Prostate gland (tissue), 2 donors: ENCODE measurements at regions of chr6 and their contacts with region 1.

Region 1: GRCh38 chr6:129251669-129252376 is 368.9 kb downstream of the LAMA2 start:
- DNase-seq: peak; percentile 57
- H3K4me3 ChIP-seq: no peak overlapping the region
- H3K27ac ChIP-seq: no peak overlapping the region
- H3K4me1 ChIP-seq: no peaks in the 10 kb centered on the region
- H3K27me3 ChIP-seq: no peaks in the 10 kb centered on the region
- CTCF ChIP-seq: peak; percentile 48 to 78 (median 68)
- POLR2A ChIP-seq: no peak

Region 2: GRCh38 chr6:128725271-128726233 is 526.3 kb before region 1 on chr6:
- intact Hi-C with region 1: loop called (anchors 5 kb)
- DNase-seq: no peak
- H3K4me3 ChIP-seq: no peak overlapping the region
- H3K27ac ChIP-seq: no peak overlapping the region
- H3K4me1 ChIP-seq: no peaks in the 10 kb centered on the region
- H3K27me3 ChIP-seq: no peaks in the 10 kb centered on the region
- CTCF ChIP-seq: peak in 3 of 4 experiments; percentile 41 to 52 (median 48)
- POLR2A ChIP-seq: no peak

Region 3: GRCh38 chr6:128807577-128807976 is 444.2 kb before region 1 on chr6:
- intact Hi-C with region 1: loop called (anchors 5 kb)
- DNase-seq: no peak
- H3K4me3 ChIP-seq: no peak overlapping the region
- H3K27ac ChIP-seq: no peak overlapping the region
- H3K4me1 ChIP-seq: no peaks in the 10 kb centered on the region
- H3K27me3 ChIP-seq: no peaks in the 10 kb centered on the region
- CTCF ChIP-seq: peak; percentile 17 to 35 (median 26)
- POLR2A ChIP-seq: no peak

Region 4: DNA sequence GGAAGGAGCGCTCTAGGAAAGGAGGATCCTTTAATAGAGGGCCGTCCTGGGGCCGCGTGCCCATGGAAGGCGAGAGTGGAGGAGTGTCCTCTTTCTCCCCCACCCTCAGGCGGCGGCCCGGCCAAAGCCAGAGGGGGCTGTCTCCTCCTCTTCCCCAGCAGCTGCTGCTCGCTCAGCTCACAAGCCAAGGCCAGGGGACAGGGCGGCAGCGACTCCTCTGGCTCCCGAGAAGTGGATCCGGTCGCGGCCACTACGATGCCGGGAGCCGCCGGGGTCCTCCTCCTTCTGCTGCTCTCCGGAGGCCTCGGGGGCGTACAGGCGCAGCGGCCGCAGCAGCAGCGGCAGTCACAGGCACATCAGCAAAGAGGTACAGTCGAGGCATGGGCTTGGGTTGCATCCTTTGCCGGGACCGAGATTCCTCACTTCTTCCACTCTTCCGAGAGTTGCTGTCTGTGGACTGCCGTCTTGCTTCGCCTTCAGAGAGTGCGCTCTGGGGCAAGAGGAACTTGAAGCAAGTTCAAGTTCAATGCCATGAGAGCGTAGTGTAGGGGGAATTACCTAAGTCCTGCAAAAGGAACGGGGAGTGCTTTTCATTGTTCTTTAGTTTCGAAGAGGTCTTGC is 368.7 kb before region 1 on chr6 and contains the start of gene LAMA2:
- intact Hi-C with region 1: loop called (anchors 5 kb)
- DNase-seq: peak; percentile 37
- H3K4me3 ChIP-seq: peak within 1 kb of the TSS; percentile 40 to 41
- H3K27ac ChIP-seq: peak within 1 kb of the TSS; percentile 47 to 70
- H3K4me1 ChIP-seq: no peaks in the 10 kb centered on the region
- H3K27me3 ChIP-seq: no peaks in the 10 kb centered on the region
- CTCF ChIP-seq: no peak
- POLR2A ChIP-seq: no peak
- total RNA-seq, gene LAMA2: 10.1 to 89.1 TPM

Region 5: DNA sequence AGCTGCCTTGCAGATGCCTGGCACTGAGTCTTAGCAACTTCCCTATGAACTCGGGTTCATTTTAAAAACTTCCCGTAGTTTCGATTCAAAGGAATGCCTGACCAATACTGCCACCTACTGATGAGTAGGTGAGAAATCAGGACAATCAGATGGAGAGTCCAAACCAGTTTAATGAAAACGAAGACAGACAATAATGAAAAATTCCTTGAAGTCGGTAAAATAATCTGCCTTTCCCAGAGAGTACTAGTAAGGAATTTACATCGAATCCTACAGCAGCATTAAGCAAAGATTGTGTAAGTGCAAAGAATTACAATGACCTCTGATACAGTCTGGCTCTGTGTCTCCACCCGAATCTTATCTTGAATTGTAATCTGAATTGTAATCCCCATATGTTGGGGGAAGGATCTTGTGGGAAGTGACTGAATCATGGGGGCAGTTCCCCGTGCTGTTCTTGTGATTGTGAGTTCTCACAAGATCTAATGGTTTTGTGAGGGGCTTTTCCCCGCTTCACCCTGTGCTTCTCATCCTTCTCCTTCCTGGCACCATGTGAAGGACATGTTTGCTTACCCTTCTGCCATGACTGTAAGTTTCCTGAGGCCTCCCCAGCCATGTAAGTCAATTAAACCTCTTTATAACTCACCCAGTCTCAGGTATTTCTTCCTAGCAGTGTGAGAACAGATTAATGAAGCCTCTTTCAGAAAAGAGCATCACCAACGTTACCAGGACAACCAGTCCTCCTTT is 323.7 kb after region 1 on chr6:
- intact Hi-C with region 1: no loop called
- DNase-seq: peak; percentile 12
- H3K4me3 ChIP-seq: no peak overlapping the region
- H3K27ac ChIP-seq: no peak overlapping the region
- H3K4me1 ChIP-seq: no peaks in the 10 kb centered on the region
- H3K27me3 ChIP-seq: no peaks in the 10 kb centered on the region
- CTCF ChIP-seq: peak; percentile 19 to 72 (median 66)
- POLR2A ChIP-seq: no peak